Activated CD4-positive, alpha-beta T cell treated with anti-CD3 and anti-CD28 coated beads for 36 hours (primary cell): ENCODE measurements at regions of chr4 and their contacts with region 1.

Region 1: DNA sequence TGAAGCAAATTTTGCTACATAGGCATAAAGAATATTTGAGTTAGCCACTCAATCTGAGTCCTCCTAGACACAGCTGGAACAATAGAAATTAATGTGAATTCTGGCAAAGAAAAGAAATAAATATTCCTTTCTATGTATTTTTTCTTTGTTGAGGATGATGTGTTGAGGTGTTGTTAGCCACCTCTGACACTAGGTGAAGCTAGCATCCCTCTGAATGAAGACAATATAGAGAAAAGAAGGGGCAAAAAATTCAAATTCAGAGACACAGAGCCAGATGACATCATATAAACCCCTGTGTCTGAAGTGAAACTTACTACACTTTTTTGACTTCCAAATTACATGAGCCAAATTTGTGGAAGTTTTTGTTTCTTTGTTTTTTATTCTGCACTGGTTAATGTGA is 34.6 kb upstream of the TMPRSS11D start:
- DNase-seq: no peak
- ATAC-seq: no peak
- H3K4me3 Mint-ChIP-seq: no peak overlapping the region
- H3K27ac Mint-ChIP-seq: no peak overlapping the region
- H3K4me1 Mint-ChIP-seq: no peaks in the 10 kb centered on the region
- H3K27me3 Mint-ChIP-seq: peaks cover 9% of the 10 kb centered on the region

Region 2: DNA sequence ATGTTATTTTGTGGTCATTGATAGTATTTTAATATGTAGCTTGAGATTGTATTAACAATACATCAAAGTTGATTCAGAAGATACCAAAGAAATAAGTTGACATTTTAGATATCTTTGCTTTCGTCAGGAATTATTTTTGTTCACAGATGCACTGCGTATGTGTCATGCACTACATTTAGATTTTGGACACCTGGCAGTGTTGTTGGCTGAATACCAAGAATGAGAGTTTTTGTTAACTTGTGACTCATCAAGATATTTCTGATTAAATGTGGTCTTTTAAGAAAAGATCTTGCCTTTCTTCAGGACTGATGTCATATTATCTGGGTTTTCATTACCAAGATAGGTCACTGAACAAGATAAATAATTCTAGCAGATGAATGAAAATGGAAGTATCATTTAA is 1006.5 kb before region 1 on chr4:
- CTCF ChIA-PET with region 1: no interaction called
- POLR2A ChIA-PET with region 1: interaction called, 11 read pairs
- intact Hi-C with region 1: no loop called
- DNase-seq: no peak
- ATAC-seq: no peak
- H3K4me3 Mint-ChIP-seq: no peak overlapping the region
- H3K27ac Mint-ChIP-seq: no peak overlapping the region
- H3K4me1 Mint-ChIP-seq: no peaks in the 10 kb centered on the region
- H3K27me3 Mint-ChIP-seq: no peaks in the 10 kb centered on the region

Region 3: DNA sequence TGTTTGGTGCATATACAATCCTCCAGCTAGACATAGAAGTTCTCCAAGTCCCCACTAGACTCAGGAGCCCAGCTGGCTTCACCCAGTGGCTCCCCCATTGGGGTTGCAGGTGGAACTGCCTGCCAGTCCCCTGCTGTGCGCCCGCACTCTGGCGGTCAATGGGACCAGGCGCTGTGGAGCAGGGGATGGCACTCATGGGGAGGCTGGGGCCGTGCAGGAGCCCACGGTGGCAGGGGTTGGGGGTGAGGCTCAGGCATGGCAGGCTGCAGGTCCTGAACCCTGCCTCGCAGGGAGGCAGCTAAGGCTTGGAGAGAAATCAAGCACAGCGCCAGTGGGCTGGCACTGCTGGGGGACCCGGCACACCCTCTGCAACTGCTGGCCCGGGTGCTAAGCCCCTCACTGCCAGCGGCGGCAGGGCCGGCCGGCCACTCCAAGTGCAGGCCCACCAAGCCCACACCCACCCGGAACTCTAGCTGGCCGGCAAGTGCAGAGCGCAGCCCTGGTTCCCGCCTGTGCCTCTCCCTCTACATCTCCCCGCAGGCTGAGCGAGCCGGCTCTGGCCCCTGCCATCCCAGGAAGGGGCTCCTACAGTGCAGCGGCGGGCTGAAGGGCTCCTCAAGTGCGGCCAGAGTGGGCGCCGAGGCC is 21.9 kb before region 1 on chr4:
- CTCF ChIA-PET with region 1: no interaction called
- POLR2A ChIA-PET with region 1: no interaction called
- intact Hi-C with region 1: no loop called
- DNase-seq: no peak
- ATAC-seq: no peak
- H3K4me3 Mint-ChIP-seq: no peak overlapping the region
- H3K27ac Mint-ChIP-seq: no peak overlapping the region
- H3K4me1 Mint-ChIP-seq: no peaks in the 10 kb centered on the region
- H3K27me3 Mint-ChIP-seq: no peaks in the 10 kb centered on the region